ENCODE measurements at regions of chr3 and their contacts with region 1.

Region 1: GRCh38 chr3:119322835-119323722 is 28.9 kb downstream of the ARHGAP31 start:
- DNase-seq: peak; percentile 59 to 70
- H3K4me3 ChIP-seq: peak overlapping the region; percentile 49 to 68 (median 66)
- H3K27ac ChIP-seq: peak overlapping the region; percentile 79
- H3K4me1 ChIP-seq: peaks cover 1 to 12% (median 10%) of the 10 kb centered on the region in 4 experiments; a peak in 5 of 7 replicates
- H3K27me3 ChIP-seq: no peaks in the 10 kb centered on the region
- CTCF ChIP-seq: peak in 1 of 3 experiments; percentile 17; a peak in 1 of 4 replicates
- EP300 ChIP-seq: no peak
- POLR2A ChIP-seq: peak; percentile 1 to 52; a peak in 2 of 3 replicates
- RAD21 ChIP-seq: peak in 1 of 2 experiments; percentile 17; a peak in 2 of 4 replicates

Region 2: GRCh38 chr3:119293871-119294695 is 29.0 kb before region 1 on chr3 and contains the start of gene ARHGAP31:
- CTCF ChIA-PET with region 1: interaction called, 4 read pairs
- POLR2A ChIA-PET with region 1: interaction called, 15 read pairs
- DNase-seq: peak in 1 of 2 experiments; percentile 78
- H3K4me3 ChIP-seq: peak within 1 kb of the TSS; percentile 73 to 84 (median 80)
- H3K27ac ChIP-seq: no peak within 1 kb of the TSS
- H3K4me1 ChIP-seq: peaks cover 2 to 14% (median 9%) of the 10 kb centered on the region in 4 experiments
- H3K27me3 ChIP-seq: peaks cover 0 to 29% (median 13%) of the 10 kb centered on the region in 4 experiments; a peak in 4 of 7 replicates
- CTCF ChIP-seq: no peak
- EP300 ChIP-seq: no peak
- POLR2A ChIP-seq: no peak
- RAD21 ChIP-seq: no peak
- total RNA-seq, gene ARHGAP31: 4.9 and 7.6 TPM in 2 replicates

Region 3: GRCh38 chr3:119343719-119344118 is 20.6 kb after region 1 on chr3:
- CTCF ChIA-PET with region 1: interaction called, 14 read pairs
- POLR2A ChIA-PET with region 1: interaction called, 12 read pairs
- DNase-seq: no peak
- H3K4me3 ChIP-seq: no peak overlapping the region
- H3K27ac ChIP-seq: no peak overlapping the region
- H3K4me1 ChIP-seq: peaks cover 0 to 8% (median 3%) of the 10 kb centered on the region in 4 experiments; a peak in 6 of 7 replicates
- H3K27me3 ChIP-seq: peaks cover 0 to 6% (median 0%) of the 10 kb centered on the region in 4 experiments; a peak in 1 of 7 replicates
- CTCF ChIP-seq: no peak
- EP300 ChIP-seq: no peak
- POLR2A ChIP-seq: no peak
- RAD21 ChIP-seq: no peak; a peak in 1 of 4 replicates

Measured in H1 (cell line).